Cardiac septum (tissue), 1 donor: ENCODE measurements at regions of chr18 and their contacts with region 1.

Region 1: GRCh38 chr18:23194155-23194996 is 59.1 kb downstream of the CABLES1 start:
- DNase-seq: no peak

Region 2: DNA sequence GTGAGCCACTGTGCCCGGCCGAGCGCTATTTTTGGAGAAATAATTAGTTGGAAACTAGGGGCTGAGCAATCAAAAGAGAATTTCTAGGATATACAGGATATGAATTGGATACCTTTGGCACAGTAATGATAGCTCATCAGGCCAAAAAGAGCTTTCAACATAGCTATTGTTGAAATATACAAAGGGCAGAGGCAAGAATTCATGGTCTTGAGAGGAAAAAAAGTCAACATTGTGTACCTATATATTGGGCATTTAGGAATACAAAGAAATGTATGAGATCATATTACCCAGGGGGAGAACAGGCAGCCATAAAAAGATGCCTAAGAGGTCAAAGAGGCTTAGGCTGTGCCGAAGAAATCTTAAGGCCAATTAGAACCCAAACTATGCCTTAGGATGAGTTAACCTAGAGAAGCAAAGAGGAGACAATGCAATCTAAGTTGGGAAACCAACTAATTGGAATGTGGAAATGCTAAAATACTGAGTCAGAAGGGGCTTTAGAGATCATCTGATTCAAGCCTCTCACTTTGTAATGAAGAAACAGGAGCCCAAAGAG is 162.3 kb before region 1 on chr18:
- intact Hi-C with region 1: no loop called
- DNase-seq: no peak

Region 3: GRCh38 chr18:23143016-23143814 is 51.2 kb before region 1 on chr18:
- intact Hi-C with region 1: loop called (anchors 5 kb)
- DNase-seq: no peak

Region 4: GRCh38 chr18:23228102-23229061 is 34.0 kb after region 1 on chr18:
- intact Hi-C with region 1: loop called (anchors 5 kb)
- DNase-seq: no peak

Region 5: DNA sequence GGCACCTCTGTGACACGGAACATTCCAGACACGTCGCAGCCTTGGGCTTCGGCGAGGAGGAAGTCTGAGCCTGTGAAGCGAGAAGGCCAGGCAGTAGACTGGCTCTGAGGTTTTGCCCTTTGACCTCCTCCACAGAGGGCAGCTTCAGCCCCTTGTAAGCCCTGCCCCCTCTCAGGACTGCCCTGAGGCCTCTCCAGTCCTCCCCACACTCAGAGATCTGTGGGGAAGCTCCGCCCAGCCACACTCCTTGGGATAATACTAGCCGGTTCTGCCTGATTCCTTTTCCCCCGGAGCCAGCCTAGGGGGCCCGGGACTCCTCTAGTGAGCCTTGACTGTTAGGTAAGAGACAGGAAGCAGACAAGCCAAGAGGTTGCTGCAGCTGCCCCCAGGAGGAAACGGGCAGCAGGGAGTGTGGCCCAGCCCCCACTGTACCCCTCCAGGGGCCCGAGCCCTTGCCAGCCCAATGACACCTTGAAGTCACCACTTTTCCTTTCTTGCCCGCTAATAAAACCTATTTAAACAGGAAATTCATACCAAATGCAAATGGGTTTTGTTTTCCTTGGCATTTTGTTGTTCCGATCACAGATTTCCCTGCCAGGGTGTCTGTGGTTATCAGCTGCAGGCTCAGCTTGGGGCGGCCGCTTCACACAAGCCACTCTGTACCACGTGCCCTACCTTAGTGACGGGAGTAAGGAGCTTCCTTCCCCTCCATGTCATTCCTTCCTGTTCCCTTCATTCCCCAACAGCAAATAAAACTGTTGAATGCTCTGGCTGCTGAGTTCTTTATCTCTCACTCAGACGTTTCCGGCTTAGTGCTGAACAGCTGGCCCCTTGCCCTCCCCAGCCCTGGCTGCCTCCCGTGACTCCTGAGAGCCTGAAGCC is 65.6 kb after region 1 on chr18:
- intact Hi-C with region 1: loop called (anchors 10 kb)
- DNase-seq: peak; percentile 88